Common myeloid progenitor, CD34-positive (primary cell): ENCODE measurements at regions of chr1 and their contacts with region 1.

Region 1: DNA sequence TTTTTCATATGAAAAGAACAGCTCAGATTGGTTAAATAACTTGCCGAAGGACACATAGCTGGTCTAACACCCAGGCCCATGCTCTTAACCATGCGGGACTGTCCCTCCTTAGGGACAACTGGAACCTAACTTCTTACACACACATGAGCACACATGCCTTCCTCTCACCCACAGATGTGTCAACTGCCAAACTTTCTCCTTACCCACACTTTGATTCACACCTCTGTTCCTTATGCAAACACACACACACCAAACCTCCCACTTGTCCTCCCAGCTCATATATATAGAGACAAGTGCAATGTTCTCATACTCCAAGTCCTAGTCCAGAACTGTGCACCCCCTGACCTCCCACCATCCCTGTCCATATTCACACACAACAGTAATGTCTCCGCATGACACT is 4.3 kb downstream of the RAB25 start:
- DNase-seq: no peak
- H3K4me3 ChIP-seq: no peak overlapping the region
- H3K27ac ChIP-seq: no peak overlapping the region
- H3K4me1 ChIP-seq: peaks cover 0 to 8% (median 4%) of the 10 kb centered on the region in 4 experiments
- H3K27me3 ChIP-seq: no peaks in the 10 kb centered on the region

Region 2: GRCh38 chr1:155946633-155947219 is 118.5 kb before region 1 on chr1:
- CTCF ChIA-PET with region 1: interaction called, 11 read pairs
- POLR2A ChIA-PET with region 1: no interaction called
- DNase-seq: no peak
- H3K4me3 ChIP-seq: peak overlapping the region in 1 of 7 experiments; percentile 25
- H3K27ac ChIP-seq: peak overlapping the region in 1 of 2 experiments; percentile 61
- H3K4me1 ChIP-seq: peaks cover 2 to 38% (median 29%) of the 10 kb centered on the region in 4 experiments
- H3K27me3 ChIP-seq: no peaks in the 10 kb centered on the region

Region 3: DNA sequence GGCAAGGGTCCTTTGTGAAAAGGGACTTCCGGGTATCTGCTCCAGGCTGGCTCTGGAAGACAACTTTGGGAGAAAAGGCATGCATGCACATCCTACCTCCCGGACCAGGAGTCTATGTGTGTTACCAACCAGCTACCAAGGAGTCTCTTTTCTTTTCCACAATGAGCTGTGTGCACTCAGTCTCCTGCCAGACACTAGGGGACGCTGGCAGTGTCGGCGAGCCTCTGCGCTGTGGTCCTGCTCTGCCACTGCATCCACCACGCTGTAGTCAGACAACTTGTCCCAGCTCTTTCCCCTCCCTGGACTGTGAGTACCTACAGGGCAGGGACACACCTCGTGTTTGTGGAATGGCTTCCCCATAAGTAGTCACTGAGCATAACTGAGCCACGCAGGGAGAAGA is 39.3 kb before region 1 on chr1:
- CTCF ChIA-PET with region 1: interaction called, 18 read pairs
- POLR2A ChIA-PET with region 1: no interaction called
- DNase-seq: peak; percentile 62 to 84 (median 82)
- H3K4me3 ChIP-seq: no peak overlapping the region
- H3K27ac ChIP-seq: no peak overlapping the region
- H3K4me1 ChIP-seq: peaks cover 2 to 6% (median 4%) of the 10 kb centered on the region in 4 experiments
- H3K27me3 ChIP-seq: peaks cover 0 to 2% (median 0%) of the 10 kb centered on the region in 5 experiments

Region 4: DNA sequence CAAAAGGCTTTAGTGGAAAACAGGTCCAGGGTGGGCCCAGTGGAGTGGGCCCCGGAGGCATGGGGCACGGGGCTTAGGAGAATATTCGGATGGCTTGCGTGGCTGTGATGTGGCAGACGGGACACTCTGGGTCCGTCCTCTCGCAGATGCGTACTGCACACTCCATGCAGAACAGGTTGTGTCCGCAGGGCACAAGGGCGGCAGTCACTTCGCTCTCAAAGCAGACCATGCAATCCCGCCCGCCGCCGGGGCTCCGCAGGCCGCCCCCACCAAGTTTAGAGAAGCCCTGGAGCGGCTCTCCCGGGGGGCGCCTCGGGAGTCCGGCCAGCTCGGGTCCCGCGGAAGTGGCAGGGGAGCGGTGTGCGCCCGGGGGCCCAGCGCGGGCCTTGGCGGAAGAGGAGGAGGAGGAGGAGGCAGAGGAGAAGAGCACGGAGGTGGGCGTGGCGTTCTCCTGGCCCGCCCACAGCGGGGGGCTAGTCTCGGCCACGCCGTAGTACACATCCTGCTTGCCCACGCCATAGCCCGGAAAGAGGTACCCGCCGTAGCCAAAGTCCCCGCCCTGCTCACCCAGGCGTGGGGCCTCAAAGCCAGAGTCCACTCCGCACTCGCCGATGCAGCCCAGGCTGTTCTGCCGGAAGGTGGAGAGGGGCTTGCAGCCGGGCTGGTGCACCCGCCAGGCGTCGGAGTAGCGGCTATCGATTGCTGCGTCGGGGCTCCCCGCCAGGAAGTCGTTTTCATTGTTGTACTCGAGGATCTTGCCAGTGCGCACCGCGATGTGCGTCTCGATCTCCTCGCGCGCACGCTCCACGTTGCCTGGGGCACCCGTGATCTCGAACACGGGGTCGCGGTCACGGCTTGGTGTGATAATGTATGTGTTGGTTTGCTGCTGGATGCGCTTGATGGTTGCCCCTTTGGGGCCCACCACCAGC is 11.6 kb after region 1 on chr1:
- CTCF ChIA-PET with region 1: interaction called, 12 read pairs
- POLR2A ChIA-PET with region 1: no interaction called
- DNase-seq: peak in 2 of 3 donors; percentile 48 to 58
- H3K4me3 ChIP-seq: peak overlapping the region in 4 of 7 experiments; percentile 42 to 73 (median 60)
- H3K27ac ChIP-seq: no peak overlapping the region
- H3K4me1 ChIP-seq: peaks cover 0 to 35% (median 25%) of the 10 kb centered on the region in 4 experiments
- H3K27me3 ChIP-seq: no peaks in the 10 kb centered on the region